Calu3 (cell line): ENCODE measurements at regions of chr1 and their contacts with region 1.

Region 1: DNA sequence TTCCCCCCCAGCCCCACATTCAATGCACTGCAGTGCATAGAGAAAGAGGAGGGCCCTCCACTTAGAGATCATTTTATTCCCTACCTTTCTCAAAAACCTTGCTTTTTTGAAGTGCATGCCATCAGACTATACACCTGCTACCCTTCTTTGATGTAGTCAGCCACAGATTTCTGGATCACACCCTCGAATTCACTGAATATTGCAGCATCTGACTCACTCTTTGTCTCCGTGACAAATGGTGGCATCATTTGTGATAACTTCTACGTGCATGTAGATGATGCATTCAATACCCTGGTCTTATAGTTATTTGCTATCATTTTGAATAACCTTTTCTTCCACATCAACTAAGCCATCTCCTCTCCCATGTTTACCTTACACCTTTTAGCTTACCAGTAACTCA is 310.3 kb upstream of the SGIP1 start:
- DNase-seq: no peak
- H3K4me3 Mint-ChIP-seq: no peak overlapping the region
- H3K27ac Mint-ChIP-seq: no peak overlapping the region
- H3K4me1 Mint-ChIP-seq: no peaks in the 10 kb centered on the region
- H3K27me3 Mint-ChIP-seq: peaks cover 13% of the 10 kb centered on the region
- CTCF ChIP-seq: no peak

Region 2: GRCh38 chr1:66073388-66073787 is 150.3 kb before region 1 on chr1:
- CTCF ChIA-PET with region 1: no interaction called
- intact Hi-C with region 1: no loop called
- DNase-seq: no peak
- H3K4me3 Mint-ChIP-seq: no peak overlapping the region
- H3K27ac Mint-ChIP-seq: no peak overlapping the region
- H3K4me1 Mint-ChIP-seq: no peaks in the 10 kb centered on the region
- H3K27me3 Mint-ChIP-seq: peaks cover 8% of the 10 kb centered on the region
- CTCF ChIP-seq: no peak

Region 3: GRCh38 chr1:66168948-66169671 is 54.6 kb before region 1 on chr1:
- CTCF ChIA-PET with region 1: no interaction called
- intact Hi-C with region 1: loop called (anchors 10 kb)
- DNase-seq: no peak
- H3K4me3 Mint-ChIP-seq: no peak overlapping the region
- H3K27ac Mint-ChIP-seq: no peak overlapping the region
- H3K4me1 Mint-ChIP-seq: no peaks in the 10 kb centered on the region
- H3K27me3 Mint-ChIP-seq: no peaks in the 10 kb centered on the region
- CTCF ChIP-seq: no peak

Region 4: GRCh38 chr1:66182551-66183178 is 41.0 kb before region 1 on chr1:
- CTCF ChIA-PET with region 1: no interaction called
- intact Hi-C with region 1: no loop called
- DNase-seq: no peak
- H3K4me3 Mint-ChIP-seq: no peak overlapping the region
- H3K27ac Mint-ChIP-seq: no peak overlapping the region
- H3K4me1 Mint-ChIP-seq: peaks cover under 1% of the 10 kb centered on the region
- H3K27me3 Mint-ChIP-seq: no peaks in the 10 kb centered on the region
- CTCF ChIP-seq: no peak